ENCODE measurements at regions of chr11 and their contacts with region 1.

Region 1: DNA sequence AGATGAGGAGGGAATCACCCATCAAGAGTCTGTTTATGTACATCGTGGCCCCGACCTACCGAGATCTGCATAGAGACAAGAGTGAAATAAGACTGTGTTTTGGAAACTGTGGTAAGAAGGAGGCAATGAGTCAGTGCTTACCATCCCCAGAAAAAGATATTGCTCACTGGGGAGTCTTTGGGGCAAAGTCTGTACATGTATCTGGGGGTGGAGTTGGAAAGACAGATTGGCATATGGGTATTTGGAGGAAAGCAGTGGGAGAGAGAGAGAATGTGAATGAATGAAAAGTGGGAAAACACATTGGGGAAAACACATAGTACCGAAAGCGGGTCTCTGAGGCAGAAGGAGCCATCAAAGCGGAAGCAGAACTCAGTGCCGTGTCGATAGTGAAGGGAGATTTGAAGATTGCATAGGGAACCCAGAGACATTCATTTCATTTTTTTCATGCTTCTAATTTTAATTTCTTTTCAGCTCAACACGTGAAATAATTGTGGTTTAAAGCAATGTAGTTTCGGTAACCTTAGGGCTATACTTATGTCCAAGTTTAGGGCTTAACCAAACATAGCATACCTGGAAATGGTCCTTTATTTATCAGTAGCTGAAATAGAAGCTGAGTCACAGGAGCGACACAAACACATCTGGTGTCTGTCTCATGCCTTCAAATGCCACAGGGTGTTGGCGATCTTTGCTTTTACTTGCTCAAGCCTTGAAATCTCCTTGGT is 98.6 kb upstream of the CD44 start:
- DNase-seq: peak; percentile 72
- ATAC-seq: peak; percentile 68
- H3K4me3 ChIP-seq: peak overlapping the region in 3 of 5 experiments; percentile 25 to 44 (median 40)
- H3K4me3 Mint-ChIP-seq: peak overlapping the region; percentile 86
- H3K27ac ChIP-seq: peak overlapping the region; percentile 41 to 66
- H3K27ac Mint-ChIP-seq: peak overlapping the region; percentile 94
- H3K4me1 ChIP-seq: peaks cover 34 to 39% of the 10 kb centered on the region in 2 donors
- H3K4me1 Mint-ChIP-seq: peaks cover 48% of the 10 kb centered on the region
- H3K27me3 ChIP-seq: no peaks in the 10 kb centered on the region
- H3K27me3 Mint-ChIP-seq: no peaks in the 10 kb centered on the region
- CTCF ChIP-seq: no peak

Region 2: DNA sequence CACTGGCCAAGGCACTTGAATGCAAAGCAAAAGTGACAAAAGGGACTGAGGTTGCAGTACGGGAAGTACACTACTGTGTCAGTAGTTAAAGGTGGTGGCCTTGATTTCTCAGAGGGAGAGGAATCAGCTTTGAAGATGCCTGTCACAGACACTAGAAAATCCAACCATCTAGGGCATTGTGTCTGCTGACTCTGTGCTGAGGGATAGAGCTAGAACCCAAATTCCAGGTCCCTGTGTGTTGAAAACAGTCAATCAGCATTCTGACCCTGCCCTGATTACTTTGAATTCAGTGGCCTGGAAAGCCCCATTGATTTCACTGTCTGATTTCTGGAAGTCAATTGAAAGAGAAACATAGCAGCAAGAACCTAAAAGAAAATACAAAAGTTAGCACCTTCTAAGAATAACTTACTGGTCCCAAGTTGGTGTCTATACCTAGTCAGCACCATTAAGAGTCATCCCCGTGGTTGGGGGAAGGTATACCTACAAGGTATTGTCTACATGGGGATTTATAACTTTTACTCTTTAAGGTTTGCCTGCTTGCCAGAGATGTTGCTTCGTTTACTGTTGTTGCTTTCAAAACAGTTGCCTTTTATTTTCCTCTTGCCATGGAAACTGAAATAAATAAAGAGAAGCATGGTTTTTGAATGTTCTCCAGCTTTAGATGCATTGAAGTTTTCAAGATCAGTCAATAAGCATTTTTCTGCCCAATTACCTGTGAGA is 26.7 kb before region 1 on chr11:
- CTCF ChIA-PET with region 1: interaction called, 3 read pairs
- POLR2A ChIA-PET with region 1: interaction called, 5 read pairs
- intact Hi-C with region 1: loop called (anchors 2 kb)
- DNase-seq: peak; percentile 70
- ATAC-seq: peak; percentile 60
- H3K4me3 ChIP-seq: peak overlapping the region in 1 of 5 experiments; percentile 0
- H3K4me3 Mint-ChIP-seq: peak overlapping the region; percentile 84
- H3K27ac ChIP-seq: peak overlapping the region; percentile 65 to 88
- H3K27ac Mint-ChIP-seq: peak overlapping the region; percentile 90
- H3K4me1 ChIP-seq: peaks cover 23 to 26% of the 10 kb centered on the region in 2 donors
- H3K4me1 Mint-ChIP-seq: peaks cover 27% of the 10 kb centered on the region
- H3K27me3 ChIP-seq: no peaks in the 10 kb centered on the region
- H3K27me3 Mint-ChIP-seq: no peaks in the 10 kb centered on the region
- CTCF ChIP-seq: no peak

Region 3: DNA sequence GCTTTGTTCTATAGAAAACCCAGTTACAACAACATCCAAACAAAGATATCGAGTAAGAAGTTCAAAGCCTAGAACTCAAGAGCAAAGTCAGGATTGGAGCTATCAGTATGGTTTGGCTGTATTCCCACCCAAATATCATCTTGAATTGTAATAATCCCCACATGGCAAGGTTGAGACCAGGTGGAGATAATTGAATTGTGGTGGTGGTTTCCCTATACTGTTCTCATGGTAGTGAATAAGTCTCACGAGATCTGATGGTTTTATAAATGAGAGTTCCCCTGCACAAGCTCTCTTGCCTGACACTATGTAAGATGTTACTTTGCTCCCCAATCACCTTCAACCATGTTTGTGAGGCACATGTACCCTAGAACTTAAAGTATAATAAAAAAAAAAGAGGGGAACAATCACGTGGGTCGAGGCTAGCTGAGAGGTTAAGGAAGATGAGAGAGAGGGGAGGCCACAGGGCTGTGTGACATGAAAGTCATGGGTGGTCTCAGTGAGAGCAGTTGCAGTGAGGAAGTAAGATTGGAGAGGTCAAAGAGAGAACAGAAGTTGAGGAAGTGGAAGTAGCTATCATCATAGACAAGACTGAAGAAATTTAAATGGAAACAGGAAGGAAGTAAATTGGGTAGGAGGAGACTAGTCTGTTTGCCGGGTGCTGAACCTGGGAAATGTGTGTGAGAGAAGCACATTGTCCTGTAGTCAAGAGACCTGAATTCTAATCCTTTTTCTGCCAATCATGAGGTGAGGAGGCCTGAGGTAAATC is 18.5 kb after region 1 on chr11:
- CTCF ChIA-PET with region 1: interaction called, 15 read pairs
- POLR2A ChIA-PET with region 1: no interaction called
- intact Hi-C with region 1: no loop called
- DNase-seq: peak; percentile 73
- ATAC-seq: peak; percentile 85
- H3K4me3 ChIP-seq: no peak overlapping the region
- H3K4me3 Mint-ChIP-seq: peak overlapping the region; percentile 2
- H3K27ac ChIP-seq: peak overlapping the region; percentile 69 to 77
- H3K27ac Mint-ChIP-seq: peak overlapping the region; percentile 63
- H3K4me1 ChIP-seq: peaks cover 29% of the 10 kb centered on the region in 2 donors
- H3K4me1 Mint-ChIP-seq: peaks cover 32% of the 10 kb centered on the region
- H3K27me3 ChIP-seq: no peaks in the 10 kb centered on the region
- H3K27me3 Mint-ChIP-seq: no peaks in the 10 kb centered on the region
- CTCF ChIP-seq: no peak

Region 4: DNA sequence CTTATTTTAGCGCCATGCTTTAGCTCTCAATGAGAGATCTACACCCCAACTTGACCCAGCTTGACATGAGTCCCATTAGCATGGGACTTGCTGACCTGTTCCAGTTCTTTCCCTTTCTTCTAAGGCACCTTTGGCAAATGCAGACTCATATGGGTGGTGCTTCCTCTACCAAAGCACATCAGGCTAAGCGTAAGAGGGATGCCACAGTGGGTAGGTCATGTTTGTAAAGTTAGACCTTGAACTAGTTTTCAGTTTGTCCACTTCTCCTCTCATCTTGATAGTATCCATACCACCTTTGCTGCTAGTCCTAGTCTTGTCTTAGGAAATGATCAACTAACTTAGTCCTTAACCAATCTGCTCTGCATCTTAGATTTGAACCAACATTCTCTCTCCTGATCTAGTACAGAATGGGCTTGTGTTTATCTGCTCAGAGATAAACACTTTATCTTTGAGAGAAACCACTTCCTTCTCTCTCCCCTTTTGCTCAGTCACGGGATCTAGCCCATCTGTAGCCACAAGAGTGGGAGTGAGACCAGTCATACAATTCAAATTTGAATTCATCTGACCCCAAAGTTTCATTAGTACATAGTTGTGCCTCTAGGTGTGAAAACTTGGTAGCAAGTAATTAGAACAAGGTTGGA is 26.5 kb after region 1 on chr11:
- CTCF ChIA-PET with region 1: interaction called, 7 read pairs
- POLR2A ChIA-PET with region 1: interaction called, 3 read pairs
- intact Hi-C with region 1: loop called (anchors 2 kb)
- DNase-seq: peak; percentile 72
- ATAC-seq: peak; percentile 69
- H3K4me3 ChIP-seq: peak overlapping the region in 1 of 5 experiments; percentile 21
- H3K4me3 Mint-ChIP-seq: peak overlapping the region; percentile 64
- H3K27ac ChIP-seq: no peak overlapping the region
- H3K27ac Mint-ChIP-seq: peak overlapping the region; percentile 61
- H3K4me1 ChIP-seq: peaks cover 26 to 34% of the 10 kb centered on the region in 2 donors
- H3K4me1 Mint-ChIP-seq: peaks cover 39% of the 10 kb centered on the region
- H3K27me3 ChIP-seq: no peaks in the 10 kb centered on the region
- H3K27me3 Mint-ChIP-seq: no peaks in the 10 kb centered on the region
- CTCF ChIP-seq: no peak

Region 5: DNA sequence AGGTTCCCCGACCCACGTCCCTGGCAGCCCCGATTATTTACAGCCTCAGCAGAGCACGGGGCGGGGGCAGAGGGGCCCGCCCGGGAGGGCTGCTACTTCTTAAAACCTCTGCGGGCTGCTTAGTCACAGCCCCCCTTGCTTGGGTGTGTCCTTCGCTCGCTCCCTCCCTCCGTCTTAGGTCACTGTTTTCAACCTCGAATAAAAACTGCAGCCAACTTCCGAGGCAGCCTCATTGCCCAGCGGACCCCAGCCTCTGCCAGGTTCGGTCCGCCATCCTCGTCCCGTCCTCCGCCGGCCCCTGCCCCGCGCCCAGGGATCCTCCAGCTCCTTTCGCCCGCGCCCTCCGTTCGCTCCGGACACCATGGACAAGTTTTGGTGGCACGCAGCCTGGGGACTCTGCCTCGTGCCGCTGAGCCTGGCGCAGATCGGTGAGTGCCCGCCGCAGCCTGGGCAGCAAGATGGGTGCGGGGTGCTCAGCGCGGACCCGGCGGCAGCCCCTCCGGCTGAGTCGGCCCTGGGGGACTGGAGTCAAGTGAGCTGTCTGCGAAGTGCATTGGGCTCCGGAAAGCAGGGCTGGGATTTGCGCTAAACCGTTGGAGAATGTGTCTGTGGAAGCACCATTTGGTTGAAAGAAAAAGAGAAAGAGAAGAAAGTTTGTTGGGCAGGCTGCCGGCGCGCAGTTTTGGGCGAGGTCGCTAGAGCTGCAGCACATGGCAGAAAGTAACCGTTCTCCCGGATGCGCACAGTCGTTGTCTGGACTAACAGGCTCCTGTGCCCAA is 98.8 kb after region 1 on chr11 and contains the start of gene CD44:
- CTCF ChIA-PET with region 1: interaction called, 11 read pairs
- POLR2A ChIA-PET with region 1: interaction called, 5 read pairs
- intact Hi-C with region 1: loop called (anchors 1 kb)
- DNase-seq: peak; percentile 90
- ATAC-seq: peak; percentile 78
- H3K4me3 ChIP-seq: peak within 1 kb of the TSS; percentile 80 to 90 (median 89)
- H3K4me3 Mint-ChIP-seq: peak within 1 kb of the TSS; percentile 96
- H3K27ac ChIP-seq: peak within 1 kb of the TSS; percentile 88 to 94
- H3K27ac Mint-ChIP-seq: peak within 1 kb of the TSS; percentile 99
- H3K4me1 ChIP-seq: peaks cover 44 to 55% of the 10 kb centered on the region in 2 donors
- H3K4me1 Mint-ChIP-seq: peaks cover 48% of the 10 kb centered on the region
- H3K27me3 ChIP-seq: no peaks in the 10 kb centered on the region
- H3K27me3 Mint-ChIP-seq: no peaks in the 10 kb centered on the region
- CTCF ChIP-seq: no peak
- total RNA-seq, gene CD44: 895 and 896 TPM in 2 replicates

Region 6: GRCh38 chr11:35144136-35144741 is 103.9 kb after region 1 on chr11:
- CTCF ChIA-PET with region 1: interaction called, 11 read pairs
- POLR2A ChIA-PET with region 1: interaction called, 5 read pairs
- intact Hi-C with region 1: loop called (anchors 1 kb)
- DNase-seq: peak; percentile 90
- ATAC-seq: peak; percentile 60
- H3K4me3 ChIP-seq: peak overlapping the region; percentile 1 to 89 (median 26)
- H3K4me3 Mint-ChIP-seq: peak overlapping the region; percentile 78
- H3K27ac ChIP-seq: peak overlapping the region; percentile 79 to 87
- H3K27ac Mint-ChIP-seq: peak overlapping the region; percentile 83
- H3K4me1 ChIP-seq: peaks cover 80 to 90% of the 10 kb centered on the region in 2 donors
- H3K4me1 Mint-ChIP-seq: peaks cover 80% of the 10 kb centered on the region
- H3K27me3 ChIP-seq: no peaks in the 10 kb centered on the region
- H3K27me3 Mint-ChIP-seq: no peaks in the 10 kb centered on the region
- CTCF ChIP-seq: peak; percentile 23

Region 7: GRCh38 chr11:35237860-35238715 is 197.7 kb after region 1 on chr11:
- CTCF ChIA-PET with region 1: no interaction called
- POLR2A ChIA-PET with region 1: no interaction called
- intact Hi-C with region 1: loop called (anchors 1 kb)
- DNase-seq: peak; percentile 81
- ATAC-seq: no peak
- H3K4me3 ChIP-seq: no peak overlapping the region
- H3K4me3 Mint-ChIP-seq: no peak overlapping the region
- H3K27ac ChIP-seq: no peak overlapping the region
- H3K27ac Mint-ChIP-seq: no peak overlapping the region
- H3K4me1 ChIP-seq: peaks cover 6 to 11% of the 10 kb centered on the region in 2 donors
- H3K4me1 Mint-ChIP-seq: peaks cover 22% of the 10 kb centered on the region
- H3K27me3 ChIP-seq: no peaks in the 10 kb centered on the region
- H3K27me3 Mint-ChIP-seq: no peaks in the 10 kb centered on the region
- CTCF ChIP-seq: peak; percentile 90